ENCODE measurements at regions of chr17 and their contacts with region 1.

Region 1: DNA sequence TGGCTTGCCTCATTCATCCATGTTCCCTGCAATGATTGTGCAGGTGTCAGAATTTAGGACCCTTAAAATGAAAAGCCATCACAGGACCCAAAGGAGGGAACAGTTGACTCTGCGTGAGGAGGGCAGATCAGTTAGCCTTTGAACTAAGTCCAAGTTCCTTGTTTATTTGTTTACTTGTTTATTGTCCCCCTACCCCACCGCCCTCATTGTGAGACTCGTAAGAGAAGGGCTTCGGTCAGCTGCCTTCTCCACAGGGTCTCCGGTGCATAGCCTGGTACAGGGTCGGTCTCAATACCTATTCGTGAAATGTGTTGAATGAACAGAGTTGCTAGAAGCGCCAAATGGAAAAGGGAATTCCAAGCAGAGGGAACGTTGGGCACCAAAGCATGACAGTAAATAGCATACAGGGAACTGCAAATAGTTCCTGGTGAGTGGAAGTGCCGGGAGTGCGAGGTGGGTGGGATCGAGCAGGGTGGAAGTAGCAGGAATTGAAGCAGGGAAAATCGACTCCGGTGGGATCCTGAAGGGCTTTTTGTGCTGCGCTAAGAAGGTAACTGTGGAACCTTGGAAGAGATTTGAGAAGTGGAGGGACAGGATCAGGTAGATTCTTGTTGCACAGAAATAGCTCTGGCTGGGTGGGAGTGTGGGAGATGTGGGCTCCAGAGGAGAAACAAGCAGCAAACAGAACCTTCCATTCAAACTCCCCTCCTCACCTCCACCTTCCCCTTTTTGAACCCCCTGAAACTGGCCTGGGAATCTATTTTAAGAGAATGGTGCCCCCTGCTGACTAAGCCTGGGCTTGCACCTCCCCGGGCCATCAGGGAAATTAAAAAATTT is 12.7 kb downstream of the SLC35B1 start:
- DNase-seq: peak; percentile 84
- ATAC-seq: peak; percentile 23
- H3K4me3 Mint-ChIP-seq: peak overlapping the region; percentile 30
- H3K27ac Mint-ChIP-seq: peak overlapping the region; percentile 81
- H3K4me1 Mint-ChIP-seq: peaks cover 40% of the 10 kb centered on the region
- H3K27me3 Mint-ChIP-seq: no peaks in the 10 kb centered on the region

Region 2: DNA sequence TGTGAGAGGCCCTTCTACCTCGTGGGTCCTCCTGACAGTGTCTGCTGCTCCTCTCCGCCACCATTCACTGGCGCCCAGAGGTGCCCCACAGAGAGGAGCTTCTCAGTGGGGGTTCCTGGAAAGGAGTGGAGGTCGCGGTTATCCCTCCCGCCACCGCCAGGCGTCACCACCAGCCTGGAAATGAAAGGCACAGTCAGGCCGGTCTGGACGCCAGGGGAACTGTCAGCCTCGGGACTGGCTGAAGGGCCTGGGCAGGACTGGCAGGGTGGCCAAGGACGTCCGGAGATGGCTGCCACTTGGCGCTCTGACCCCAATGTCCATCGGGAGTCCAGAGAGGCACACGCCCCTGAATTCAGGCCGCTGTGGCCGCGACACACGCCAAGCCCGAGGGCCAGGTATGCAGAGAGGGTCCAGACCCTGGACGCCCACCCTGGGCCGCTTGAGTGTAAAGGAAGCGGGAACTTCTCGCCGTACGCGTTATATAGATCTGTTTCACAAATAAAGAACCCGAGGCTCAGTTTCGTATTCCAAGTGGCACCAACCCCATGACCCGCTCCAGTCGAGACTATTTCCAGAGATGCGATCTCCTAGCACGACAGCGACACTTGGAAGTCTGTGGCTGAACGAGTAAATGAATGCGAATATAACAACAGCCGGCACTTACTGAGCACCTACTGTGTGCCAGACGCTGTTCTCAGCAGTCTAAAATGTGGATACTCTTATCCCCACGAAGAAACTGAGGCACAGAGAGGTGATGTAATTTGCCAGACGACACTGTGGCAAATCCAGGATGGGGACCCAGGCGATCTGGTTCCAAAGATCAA is 127.0 kb before region 1 on chr17:
- CTCF ChIA-PET with region 1: interaction called, 514 read pairs
- POLR2A ChIA-PET with region 1: interaction called, 15 read pairs
- DNase-seq: peak; percentile 88
- ATAC-seq: peak; percentile 50
- H3K4me3 Mint-ChIP-seq: peak overlapping the region; percentile 56
- H3K27ac Mint-ChIP-seq: no peak overlapping the region
- H3K4me1 Mint-ChIP-seq: peaks cover 35% of the 10 kb centered on the region
- H3K27me3 Mint-ChIP-seq: peaks cover 30% of the 10 kb centered on the region

Region 3: GRCh38 chr17:49677933-49678847 is 16.9 kb before region 1 on chr17 and contains the start of gene SPOP:
- CTCF ChIA-PET with region 1: interaction called, 45 read pairs
- POLR2A ChIA-PET with region 1: interaction called, 5 read pairs
- DNase-seq: peak; percentile 100
- ATAC-seq: peak; percentile 86
- H3K4me3 Mint-ChIP-seq: peak within 1 kb of the TSS; percentile 88
- H3K27ac Mint-ChIP-seq: peak within 1 kb of the TSS; percentile 97
- H3K4me1 Mint-ChIP-seq: peaks cover 39% of the 10 kb centered on the region
- H3K27me3 Mint-ChIP-seq: peaks cover 2% of the 10 kb centered on the region
- total RNA-seq, gene SPOP: 49.5 to 52.0 TPM

Region 4: DNA sequence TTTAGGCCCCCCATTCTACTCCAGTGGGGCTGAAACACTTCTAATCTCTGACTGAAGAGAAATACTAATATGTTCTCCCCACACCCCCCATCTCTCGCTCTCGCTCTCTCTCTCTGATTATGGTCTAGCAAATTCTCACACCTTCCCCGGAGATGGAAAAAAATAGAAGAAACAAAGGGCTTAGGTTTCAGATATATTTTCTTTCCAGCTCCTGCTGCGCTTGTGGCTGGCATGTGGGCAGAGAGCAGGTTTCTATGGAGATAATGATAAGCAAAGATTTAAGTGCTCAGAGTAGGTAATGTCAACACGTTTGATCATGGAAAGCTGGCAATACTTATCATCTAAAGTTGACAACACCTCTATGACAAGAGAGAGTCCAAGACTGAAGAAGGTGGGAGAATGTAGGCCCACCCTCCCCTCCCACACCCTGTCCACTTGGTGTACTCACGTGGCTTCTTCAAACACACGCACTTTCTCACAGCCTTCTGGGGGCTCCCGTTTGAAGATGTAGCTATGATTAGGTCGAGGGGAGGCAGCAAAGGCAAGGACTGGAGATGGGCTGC is 20.7 kb after region 1 on chr17:
- CTCF ChIA-PET with region 1: interaction called, 14 read pairs
- POLR2A ChIA-PET with region 1: interaction called, 3 read pairs
- DNase-seq: peak; percentile 44
- ATAC-seq: peak; percentile 70
- H3K4me3 Mint-ChIP-seq: no peak overlapping the region
- H3K27ac Mint-ChIP-seq: peak overlapping the region; percentile 50
- H3K4me1 Mint-ChIP-seq: peaks cover 34% of the 10 kb centered on the region
- H3K27me3 Mint-ChIP-seq: no peaks in the 10 kb centered on the region

Region 5: GRCh38 chr17:49748791-49749190 is 53.7 kb after region 1 on chr17:
- CTCF ChIA-PET with region 1: interaction called, 17 read pairs
- POLR2A ChIA-PET with region 1: no interaction called
- DNase-seq: peak; percentile 77
- ATAC-seq: peak; percentile 79
- H3K4me3 Mint-ChIP-seq: peak overlapping the region; percentile 68
- H3K27ac Mint-ChIP-seq: peak overlapping the region; percentile 89
- H3K4me1 Mint-ChIP-seq: peaks cover 77% of the 10 kb centered on the region
- H3K27me3 Mint-ChIP-seq: no peaks in the 10 kb centered on the region